ENCODE measurements at regions of chr20 and their contacts with region 1.

Region 1: DNA sequence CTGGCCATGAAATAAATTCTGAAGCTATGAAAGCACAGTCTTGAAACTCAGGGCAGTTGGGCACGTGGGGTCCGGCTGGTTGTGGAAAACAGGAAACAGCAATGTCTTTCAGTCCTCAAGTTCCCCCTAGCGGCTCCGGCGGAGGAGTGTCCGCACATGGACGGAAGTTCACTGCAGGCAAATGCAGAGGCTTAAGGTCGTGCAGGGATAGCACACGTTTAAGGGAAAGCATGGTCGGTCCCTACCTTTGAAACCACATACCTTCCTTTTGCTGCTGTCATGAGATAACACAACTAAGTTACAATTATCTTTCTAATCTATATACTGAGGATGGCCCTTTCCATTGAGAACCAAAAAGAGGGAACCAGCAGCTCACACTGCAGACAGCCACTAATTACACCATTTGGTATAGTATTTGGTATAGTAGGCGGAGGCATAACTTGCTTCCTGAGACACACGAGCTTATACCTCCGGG is 52.6 kb upstream of the NFATC2 start:
- H3K4me3 ChIP-seq: no peak overlapping the region
- H3K27ac ChIP-seq: no peak overlapping the region
- H3K4me1 ChIP-seq: no peaks in the 10 kb centered on the region
- CTCF ChIP-seq: peak; percentile 75

Region 2: DNA sequence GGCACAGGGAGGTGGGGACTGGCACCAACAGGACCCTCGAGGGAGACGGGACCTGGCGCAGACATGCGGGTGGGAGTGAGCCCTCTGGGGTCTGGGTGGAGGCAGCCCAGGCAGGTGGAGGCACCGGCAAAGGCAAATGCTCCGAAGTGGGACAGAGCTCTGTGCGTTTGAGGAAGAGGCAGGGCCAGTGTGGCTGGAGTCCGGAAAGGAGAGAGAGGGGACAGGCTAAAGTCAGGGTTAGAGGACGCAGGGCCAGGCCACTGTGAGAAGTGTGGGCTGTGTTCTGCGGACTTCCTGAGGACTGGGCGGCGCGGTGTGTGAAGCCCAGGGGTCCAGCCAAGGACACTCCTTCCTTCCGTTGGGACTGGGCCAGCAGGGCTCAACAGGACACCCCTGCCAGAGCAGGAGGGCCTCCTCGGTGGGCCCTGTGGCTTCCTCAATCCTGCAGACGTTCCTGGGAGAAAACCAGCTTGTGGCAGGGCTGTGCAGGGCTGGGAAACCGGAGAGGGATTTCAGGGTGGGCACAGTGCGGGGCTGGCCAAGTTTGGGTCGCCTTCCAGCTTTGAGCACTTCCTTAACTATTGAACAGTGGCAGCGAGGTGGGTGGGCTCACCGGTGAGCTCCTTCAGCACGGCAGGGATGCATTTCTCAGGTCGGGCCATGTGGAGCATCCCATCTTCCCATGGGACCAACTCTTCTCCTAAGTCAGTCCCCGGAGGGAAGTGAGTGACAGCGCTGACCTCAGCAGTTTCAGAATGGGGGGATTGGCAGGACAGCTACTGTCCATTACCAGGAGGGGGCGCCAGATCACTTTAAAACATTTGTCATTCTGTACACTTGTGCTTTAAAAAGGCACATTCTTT is 614.0 kb before region 1 on chr20:
- CTCF ChIA-PET with region 1: interaction called, 12 read pairs
- POLR2A ChIA-PET with region 1: no interaction called
- H3K4me3 ChIP-seq: no peak overlapping the region
- H3K27ac ChIP-seq: no peak overlapping the region
- H3K4me1 ChIP-seq: no peaks in the 10 kb centered on the region
- CTCF ChIP-seq: peak; percentile 27; the same call in 1 of the 2 replicates

Region 3: GRCh38 chr20:51366155-51366886 is 228.8 kb before region 1 on chr20:
- CTCF ChIA-PET with region 1: interaction called, 31 read pairs
- POLR2A ChIA-PET with region 1: interaction called, 4 read pairs
- H3K4me3 ChIP-seq: no peak overlapping the region
- H3K27ac ChIP-seq: no peak overlapping the region
- H3K4me1 ChIP-seq: no peaks in the 10 kb centered on the region
- CTCF ChIP-seq: no peak

Region 4: DNA sequence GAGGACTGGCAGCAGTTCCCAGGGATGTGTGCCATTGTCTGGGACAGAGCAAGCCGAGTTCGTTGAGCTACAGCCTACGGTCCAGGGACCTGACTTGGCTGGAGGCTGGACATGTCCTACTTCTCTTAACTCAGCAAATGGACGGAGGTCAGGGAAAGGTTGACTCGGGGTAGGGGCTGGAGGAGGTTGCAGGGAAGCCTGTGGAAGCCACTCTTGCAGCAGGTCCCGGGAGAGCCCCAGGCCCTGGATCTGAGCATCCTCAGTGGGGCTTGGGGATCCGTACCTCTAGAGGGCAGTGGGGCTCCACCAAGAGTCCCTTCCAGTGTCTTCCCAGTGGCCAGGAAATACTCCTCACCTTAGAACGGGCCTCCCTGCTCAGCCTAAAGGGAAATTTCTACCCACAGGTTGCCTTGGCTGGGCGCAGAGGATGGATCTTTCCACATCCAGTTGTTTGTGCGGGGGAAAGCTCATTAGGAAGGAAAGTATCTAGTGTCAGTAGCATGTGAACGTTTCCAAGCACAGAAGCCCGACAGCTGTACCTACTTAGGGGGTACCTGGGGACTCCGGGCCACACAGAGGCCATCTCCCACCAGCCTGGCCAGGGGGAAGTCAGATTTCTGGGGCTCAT is 222.8 kb before region 1 on chr20:
- CTCF ChIA-PET with region 1: interaction called, 31 read pairs
- POLR2A ChIA-PET with region 1: interaction called, 3 read pairs
- H3K4me3 ChIP-seq: no peak overlapping the region
- H3K27ac ChIP-seq: no peak overlapping the region
- H3K4me1 ChIP-seq: no peaks in the 10 kb centered on the region
- CTCF ChIP-seq: peak; percentile 79

Region 5: GRCh38 chr20:51385646-51386530 is 209.2 kb before region 1 on chr20:
- CTCF ChIA-PET with region 1: interaction called, 15 read pairs
- POLR2A ChIA-PET with region 1: interaction called, 3 read pairs
- H3K4me3 ChIP-seq: no peak overlapping the region
- H3K27ac ChIP-seq: no peak overlapping the region
- H3K4me1 ChIP-seq: no peaks in the 10 kb centered on the region; the same call in 1 of the 2 replicates
- CTCF ChIP-seq: peak; percentile 24; the same call in 1 of the 2 replicates

Region 6: DNA sequence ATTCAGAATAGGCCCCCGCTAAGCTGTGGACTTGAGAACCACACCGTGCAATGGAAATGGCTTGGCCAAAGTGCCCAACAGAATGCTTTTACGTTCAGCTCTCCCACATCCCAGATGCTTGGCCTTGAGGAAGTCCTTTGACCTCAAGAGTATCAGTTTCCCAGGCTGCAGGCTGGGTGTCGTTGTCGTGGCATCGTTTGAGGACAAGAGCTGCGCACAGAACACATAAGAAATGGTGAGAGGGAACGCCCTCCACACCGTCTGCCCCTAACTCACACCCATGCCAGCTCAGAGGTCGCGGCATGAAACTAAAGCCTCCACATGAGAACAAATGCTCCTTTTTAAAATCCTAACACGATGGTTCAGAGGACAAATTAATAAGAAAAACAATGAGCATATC is 89.5 kb before region 1 on chr20:
- CTCF ChIA-PET with region 1: interaction called, 10 read pairs
- POLR2A ChIA-PET with region 1: no interaction called
- H3K4me3 ChIP-seq: no peak overlapping the region
- H3K27ac ChIP-seq: no peak overlapping the region
- H3K4me1 ChIP-seq: peaks cover 3% of the 10 kb centered on the region; the same call in 1 of the 2 replicates
- CTCF ChIP-seq: no peak

Region 7: DNA sequence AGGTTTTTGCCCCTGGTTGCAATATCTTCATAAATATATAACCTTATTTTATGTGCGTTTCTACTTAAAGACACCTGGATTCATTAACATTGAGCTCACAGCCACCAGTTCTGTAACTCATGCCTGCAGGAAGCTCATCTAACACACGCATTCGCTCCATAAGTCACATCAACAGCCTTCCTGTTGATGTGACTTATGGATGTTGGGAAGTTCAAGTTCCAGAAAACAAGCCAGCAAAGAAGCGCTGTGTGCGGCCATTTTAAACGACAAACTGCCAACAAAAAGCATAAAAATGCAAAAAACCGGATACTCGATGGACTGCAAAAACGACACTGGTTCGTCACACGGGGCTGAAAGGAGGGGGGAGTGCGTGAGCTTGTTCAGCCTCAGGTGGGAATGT is 25.3 kb after region 1 on chr20:
- CTCF ChIA-PET with region 1: interaction called, 12 read pairs
- POLR2A ChIA-PET with region 1: no interaction called
- H3K4me3 ChIP-seq: no peak overlapping the region
- H3K27ac ChIP-seq: no peak overlapping the region
- H3K4me1 ChIP-seq: no peaks in the 10 kb centered on the region
- CTCF ChIP-seq: no peak